Naive thymus-derived CD8-positive, alpha-beta T cell (primary cell): ENCODE measurements at regions of chr20 and their contacts with region 1.

Region 1: GRCh38 chr20:57628047-57628961 is 8.1 kb upstream of the ZBP1 start:
- DNase-seq: peak in 9 of 10 donors; percentile 53 to 86 (median 59)
- ATAC-seq: peak; percentile 80 to 84
- H3K4me3 Mint-ChIP-seq: peak overlapping the region; percentile 77 to 96 (median 89)
- H3K27ac Mint-ChIP-seq: peak overlapping the region; percentile 93 to 99 (median 98)
- H3K4me1 Mint-ChIP-seq: peaks cover 31 to 86% (median 74%) of the 10 kb centered on the region in 4 donors
- H3K27me3 Mint-ChIP-seq: no peaks in the 10 kb centered on the region

Region 2: DNA sequence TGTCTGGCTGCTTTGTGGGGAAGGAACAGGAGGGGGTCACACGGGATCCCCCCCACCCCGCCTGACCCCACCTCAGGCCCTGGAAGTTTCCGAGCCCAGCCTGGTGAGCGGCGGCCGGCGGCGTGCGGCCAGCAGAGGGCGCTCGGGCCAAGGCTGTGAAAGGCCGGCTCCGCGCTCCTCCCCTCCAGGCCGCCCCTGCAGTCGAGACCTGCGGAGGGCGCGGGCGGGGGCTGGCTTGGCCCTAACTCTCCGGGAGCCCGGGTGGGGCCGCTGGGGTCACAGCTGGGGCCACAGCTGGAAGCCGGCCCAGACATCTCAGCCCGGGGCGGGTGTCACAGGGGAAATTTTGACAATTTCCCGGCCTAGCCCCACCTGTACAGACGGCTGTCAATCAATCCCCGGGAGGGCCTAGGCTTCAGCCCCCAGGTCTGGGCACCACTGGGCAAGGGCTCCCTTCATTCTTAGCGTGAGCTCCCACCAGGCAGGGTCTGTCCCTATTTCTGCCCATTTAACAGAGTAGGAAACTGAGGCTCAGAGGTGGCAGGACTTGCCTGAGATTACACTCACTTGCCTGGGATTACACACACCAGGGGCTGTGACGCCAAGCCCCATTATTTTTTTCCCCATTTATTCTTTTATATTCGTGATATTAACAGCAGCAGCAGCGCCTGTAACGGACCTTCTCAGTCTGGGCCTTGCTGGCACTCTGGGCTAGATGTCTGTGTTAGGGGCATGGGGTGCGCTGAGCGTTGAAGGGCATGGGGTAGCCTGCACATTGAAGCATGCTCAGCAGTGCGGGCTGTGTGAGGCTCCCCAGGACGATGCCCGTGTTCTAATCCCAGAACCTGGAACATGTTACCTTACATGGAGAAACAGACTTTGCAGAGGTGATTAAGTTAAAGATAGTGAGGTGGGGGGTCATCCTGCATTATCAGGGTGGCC is 31.0 kb before region 1 on chr20:
- POLR2A ChIA-PET with region 1: interaction called, 12 read pairs
- DNase-seq: peak; percentile 57 to 86 (median 78)
- ATAC-seq: peak; percentile 91 to 96
- H3K4me3 Mint-ChIP-seq: peak overlapping the region in 2 of 10 donors; percentile 18 to 44
- H3K27ac Mint-ChIP-seq: peak overlapping the region in 3 of 10 donors; percentile 33 to 46 (median 36)
- H3K4me1 Mint-ChIP-seq: peaks cover 5 to 11% (median 7%) of the 10 kb centered on the region in 4 donors
- H3K27me3 Mint-ChIP-seq: no peaks in the 10 kb centered on the region

Region 3: GRCh38 chr20:57654363-57654997 is 26.2 kb after region 1 on chr20:
- POLR2A ChIA-PET with region 1: interaction called, 11 read pairs
- DNase-seq: peak; percentile 36 to 82 (median 64)
- ATAC-seq: peak; percentile 70 to 71
- H3K4me3 Mint-ChIP-seq: peak overlapping the region in 6 of 10 donors; percentile 25 to 82 (median 48)
- H3K27ac Mint-ChIP-seq: peak overlapping the region in 7 of 10 donors; percentile 14 to 91 (median 83)
- H3K4me1 Mint-ChIP-seq: peaks cover 29 to 51% (median 42%) of the 10 kb centered on the region in 4 donors
- H3K27me3 Mint-ChIP-seq: no peaks in the 10 kb centered on the region

Region 4: GRCh38 chr20:57709931-57710799 is 81.9 kb after region 1 on chr20 and contains the start of gene PMEPA1:
- POLR2A ChIA-PET with region 1: interaction called, 19 read pairs
- DNase-seq: peak; percentile 86 to 96 (median 94)
- ATAC-seq: peak; percentile 79 to 83
- H3K4me3 Mint-ChIP-seq: peak within 1 kb of the TSS; percentile 82 to 97 (median 94)
- H3K27ac Mint-ChIP-seq: peak within 1 kb of the TSS; percentile 87 to 97 (median 96)
- H3K4me1 Mint-ChIP-seq: peaks cover 18 to 53% (median 43%) of the 10 kb centered on the region in 4 donors
- H3K27me3 Mint-ChIP-seq: no peaks in the 10 kb centered on the region
- polyA plus RNA-seq, gene PMEPA1: 1.6 to 5.0 (median 3.5) TPM

Region 5: GRCh38 chr20:58087193-58087858 is 459.0 kb after region 1 on chr20:
- POLR2A ChIA-PET with region 1: no interaction called
- DNase-seq: no peak
- ATAC-seq: no peak
- H3K4me3 Mint-ChIP-seq: no peak overlapping the region
- H3K27ac Mint-ChIP-seq: no peak overlapping the region
- H3K4me1 Mint-ChIP-seq: no peaks in the 10 kb centered on the region
- H3K27me3 Mint-ChIP-seq: peaks cover 3 to 23% (median 4%) of the 10 kb centered on the region in 5 donors